HCT116 (cell line): ENCODE measurements at regions of chr18 and their contacts with region 1.

Region 1: DNA sequence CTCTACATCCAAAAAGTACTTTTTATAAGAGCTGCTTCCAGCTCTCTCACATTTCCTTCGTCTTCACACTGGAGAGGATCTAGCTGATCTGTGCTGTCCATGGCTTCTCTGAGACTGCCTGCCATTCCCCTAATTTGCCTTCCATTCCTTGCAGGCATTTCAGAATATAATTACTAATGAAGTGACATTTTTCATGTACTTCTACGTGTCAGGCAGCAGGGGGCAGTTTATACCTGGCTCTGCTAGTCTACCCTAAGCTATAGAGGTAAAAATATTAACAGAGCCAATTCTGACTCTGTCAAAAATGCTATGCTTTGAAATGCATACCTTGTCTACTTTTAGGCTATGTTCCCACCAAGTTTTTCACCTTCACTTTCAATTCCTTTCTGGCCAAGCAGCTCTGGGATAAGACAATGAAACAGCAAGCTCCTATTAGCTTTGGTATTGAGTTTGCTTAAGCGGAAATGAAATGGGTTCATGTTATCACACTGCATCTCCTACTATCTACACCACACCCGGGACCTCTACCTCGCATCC is 81.9 kb downstream of the MEP1B start:
- DNase-seq: peak; percentile 16
- ATAC-seq: peak; percentile 87
- H3K4me3 ChIP-seq: no peak overlapping the region
- H3K27ac ChIP-seq: no peak overlapping the region
- H3K4me1 ChIP-seq: no peaks in the 10 kb centered on the region
- H3K27me3 ChIP-seq: no peaks in the 10 kb centered on the region
- CTCF ChIP-seq: peak; percentile 68 to 83 (median 71)
- POLR2A ChIP-seq: no peak
- RAD21 ChIP-seq: peak; percentile 90

Region 2: DNA sequence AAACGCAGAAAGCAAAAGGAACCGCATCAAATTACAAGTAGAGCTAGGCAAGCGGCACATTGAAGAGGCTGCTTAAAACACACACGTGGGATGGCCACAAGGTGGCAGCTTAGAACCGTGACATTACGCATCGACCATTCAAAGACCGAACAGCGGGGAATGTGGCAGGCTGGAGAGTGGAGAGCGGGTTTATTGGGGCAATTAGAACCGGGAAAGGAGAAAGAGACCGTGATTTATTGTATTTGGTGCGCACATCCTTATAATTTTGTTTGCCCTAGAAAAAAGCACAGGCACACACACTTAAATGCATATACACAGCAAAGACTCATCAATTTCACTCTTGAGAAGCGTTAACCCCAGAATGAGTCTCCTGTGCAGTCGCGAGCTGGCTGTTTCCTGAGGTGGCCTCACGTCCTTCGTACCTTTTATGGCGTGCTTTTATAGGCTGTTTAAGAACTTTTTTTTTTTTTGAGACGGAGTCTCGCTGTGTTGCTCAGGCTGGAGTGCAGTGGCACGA is 113.6 kb before region 1 on chr18:
- CTCF ChIA-PET with region 1: interaction called, 6 read pairs
- POLR2A ChIA-PET with region 1: no interaction called
- RAD21 ChIA-PET with region 1: interaction called, 3 to 5 read pairs
- intact Hi-C with region 1: loop called (anchors 5 kb)
- DNase-seq: peak; percentile 85
- ATAC-seq: peak; percentile 98
- H3K4me3 ChIP-seq: 0 out of 4 replicates have a peak overlapping the region, but pooled peaks of 1 of the 2 experiments have one; percentile 20
- H3K27ac ChIP-seq: no peak overlapping the region
- H3K4me1 ChIP-seq: peaks cover 4 to 16% of the 10 kb centered on the region in 2 experiments; a peak in 3 of 4 replicates
- H3K27me3 ChIP-seq: no peaks in the 10 kb centered on the region
- CTCF ChIP-seq: peak; percentile 75 to 86 (median 76)
- POLR2A ChIP-seq: no peak
- RAD21 ChIP-seq: peak; percentile 94

Region 3: DNA sequence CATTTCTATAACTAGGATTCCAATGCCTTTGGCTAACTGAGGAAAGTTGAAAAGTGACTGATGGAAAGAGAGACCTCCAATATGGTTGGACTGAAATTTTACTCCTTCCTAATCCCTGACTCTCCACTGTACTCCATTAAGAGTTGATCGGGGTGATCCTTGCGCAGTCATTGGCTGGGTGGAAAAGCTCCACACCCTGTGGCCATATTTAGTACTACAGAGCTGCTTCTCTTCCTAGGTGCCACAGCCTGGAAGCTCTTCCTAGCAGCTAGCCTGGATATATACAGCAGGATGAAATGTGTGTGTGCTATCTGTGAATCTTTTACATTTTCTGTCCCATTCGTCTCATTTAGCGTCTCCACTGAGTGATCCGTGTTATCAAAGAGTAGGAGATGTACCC is 10.7 kb before region 1 on chr18:
- CTCF ChIA-PET with region 1: interaction called, 15 read pairs
- POLR2A ChIA-PET with region 1: no interaction called
- RAD21 ChIA-PET with region 1: no interaction called
- intact Hi-C with region 1: no loop called
- DNase-seq: no peak
- ATAC-seq: peak; percentile 86
- H3K4me3 ChIP-seq: no peak overlapping the region
- H3K27ac ChIP-seq: no peak overlapping the region
- H3K4me1 ChIP-seq: no peaks in the 10 kb centered on the region
- H3K27me3 ChIP-seq: 0 out of 2 replicates have a peak, but pooled peaks cover 3% of the 10 kb centered on the region
- CTCF ChIP-seq: peak in 1 of 3 experiments; percentile 31; a peak in 1 of 6 replicates
- POLR2A ChIP-seq: no peak
- RAD21 ChIP-seq: no peak